ENCODE measurements at regions of chr5 and their contacts with region 1.

Region 1: GRCh38 chr5:154214371-154215106 is 24.0 kb downstream of the GALNT10 start:
- DNase-seq: peak; percentile 35
- H3K4me3 Mint-ChIP-seq: peak overlapping the region; percentile 32
- H3K27ac Mint-ChIP-seq: peak overlapping the region; percentile 83
- H3K4me1 Mint-ChIP-seq: peaks cover 49% of the 10 kb centered on the region
- H3K27me3 Mint-ChIP-seq: no peaks in the 10 kb centered on the region

Region 2: GRCh38 chr5:154038707-154039457 is 175.7 kb before region 1 on chr5 and contains the starts of genes FAM114A2 and MFAP3:
- CTCF ChIA-PET with region 1: no interaction called
- intact Hi-C with region 1: no loop called
- DNase-seq: peak; percentile 93
- H3K4me3 Mint-ChIP-seq: peak within 1 kb of the TSS; percentile 95
- H3K27ac Mint-ChIP-seq: peak within 1 kb of the TSS; percentile 92
- H3K4me1 Mint-ChIP-seq: peaks cover 44% of the 10 kb centered on the region
- H3K27me3 Mint-ChIP-seq: no peaks in the 10 kb centered on the region
- total RNA-seq, gene FAM114A2: 25.0 to 25.9 TPM
- total RNA-seq, gene MFAP3: 7.9 to 8.4 TPM

Region 3: DNA sequence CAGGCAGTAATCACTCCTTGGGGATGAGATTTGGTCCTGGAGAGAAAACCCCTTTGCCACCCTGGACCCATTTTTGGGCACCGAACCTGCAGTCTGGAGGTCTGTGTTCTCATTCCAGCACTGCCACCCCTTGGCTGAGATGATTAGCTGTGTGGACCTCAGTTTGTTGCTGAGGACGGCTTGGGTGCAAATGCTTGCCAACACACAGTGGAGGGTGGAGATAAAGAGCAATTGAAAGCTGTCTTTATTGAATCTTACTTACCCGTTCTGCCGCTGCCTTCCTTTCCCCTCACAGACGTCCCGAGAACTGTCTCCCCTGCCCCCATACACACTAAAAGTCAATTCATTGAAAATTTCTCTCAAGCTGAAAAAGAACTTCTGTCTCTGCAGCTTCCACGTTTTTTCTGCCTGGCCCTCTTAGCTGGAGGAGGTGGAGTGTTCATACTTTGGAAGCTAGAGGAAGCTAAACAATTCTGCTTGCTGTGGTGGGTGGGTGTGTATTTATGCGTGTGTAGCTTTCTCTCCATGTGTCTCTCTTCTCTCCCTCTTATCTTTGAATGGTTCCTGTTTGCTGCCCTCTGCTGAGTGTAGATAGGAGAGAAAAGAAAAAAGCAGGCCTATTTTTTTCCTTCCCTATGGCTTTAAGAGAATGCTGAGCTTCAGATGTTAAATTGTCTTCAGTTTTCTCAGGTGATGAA is 17.4 kb before region 1 on chr5:
- CTCF ChIA-PET with region 1: interaction called, 17 read pairs
- intact Hi-C with region 1: loop called (anchors 1 kb)
- DNase-seq: no peak
- H3K4me3 Mint-ChIP-seq: no peak overlapping the region
- H3K27ac Mint-ChIP-seq: peak overlapping the region; percentile 86
- H3K4me1 Mint-ChIP-seq: peaks cover 67% of the 10 kb centered on the region
- H3K27me3 Mint-ChIP-seq: no peaks in the 10 kb centered on the region

Region 4: GRCh38 chr5:154278908-154279307 is 64.4 kb after region 1 on chr5:
- CTCF ChIA-PET with region 1: no interaction called
- intact Hi-C with region 1: loop called (anchors 1 kb)
- DNase-seq: no peak
- H3K4me3 Mint-ChIP-seq: no peak overlapping the region
- H3K27ac Mint-ChIP-seq: no peak overlapping the region
- H3K4me1 Mint-ChIP-seq: peaks cover 30% of the 10 kb centered on the region
- H3K27me3 Mint-ChIP-seq: no peaks in the 10 kb centered on the region

Region 5: DNA sequence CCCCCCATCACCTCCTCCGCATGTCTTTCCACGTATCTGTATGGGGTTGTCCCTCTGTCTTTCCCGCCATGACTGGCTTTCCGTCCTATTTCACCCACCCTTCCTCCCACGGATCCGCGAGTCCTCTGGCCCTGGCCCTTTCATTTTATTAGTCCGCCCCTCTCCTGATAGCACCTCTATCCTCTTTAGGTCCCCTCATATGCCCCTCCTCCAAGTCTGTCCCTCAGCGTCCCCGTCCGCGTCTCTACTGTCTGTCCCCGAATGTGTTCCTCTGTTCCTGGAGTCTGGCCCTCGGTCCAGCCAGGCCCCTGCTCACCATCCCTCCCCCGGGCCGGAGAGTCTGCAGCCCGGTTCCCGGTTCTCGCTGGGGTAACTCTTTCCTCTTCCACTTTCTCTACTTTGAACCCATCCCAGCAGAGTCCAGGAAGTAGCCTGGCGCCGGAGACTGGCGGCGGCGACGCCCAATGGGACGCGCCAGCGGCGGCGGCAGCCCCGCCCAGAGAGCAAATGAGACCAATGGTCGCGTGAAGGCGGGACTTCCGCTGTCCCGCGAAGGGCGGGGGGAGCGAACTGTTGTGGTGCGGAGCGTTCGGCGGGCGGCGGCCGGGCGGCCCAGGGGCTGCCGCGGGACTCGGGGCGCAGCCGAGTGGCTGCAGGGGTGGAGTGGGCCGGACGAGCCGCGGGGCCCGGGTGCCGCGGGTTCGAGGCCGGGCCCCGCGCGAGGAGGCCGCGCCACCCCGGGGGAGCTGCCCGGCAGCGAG is 231.1 kb after region 1 on chr5 and contains the start of gene SAP30L:
- CTCF ChIA-PET with region 1: no interaction called
- intact Hi-C with region 1: loop called (anchors 2 kb)
- DNase-seq: peak; percentile 94
- H3K4me3 Mint-ChIP-seq: peak within 1 kb of the TSS; percentile 98
- H3K27ac Mint-ChIP-seq: peak within 1 kb of the TSS; percentile 92
- H3K4me1 Mint-ChIP-seq: peaks cover 42% of the 10 kb centered on the region
- H3K27me3 Mint-ChIP-seq: no peaks in the 10 kb centered on the region
- total RNA-seq, gene SAP30L: 29.3 to 30.3 TPM

Measured in activated naive CD4-positive, alpha-beta T cell treated with anti-CD3 and anti-CD28 coated beads for 36 hours (primary cell).